Activated T-helper 1 cell treated with anti-CD3 and anti-CD28 coated beads, Interleukin-12 subunit alpha, Interleukin-12 subunit beta, Interleukin-2, Interleukin-4 antibody, amounts not matched to agents 30 ng/mL and 10 ng/mL and 1 ng/mL, durations not matched to agents 14 hours and 24 hours and 36 hours (primary cell): ENCODE measurements at regions of chr10 and their contacts with region 1.

Region 1: GRCh38 chr10:15433850-15434537 is 62.9 kb upstream of the FAM171A1 start:
- DNase-seq: no peak
- H3K4me3 Mint-ChIP-seq: peak overlapping the region; percentile 65
- H3K27ac Mint-ChIP-seq: no peak overlapping the region
- H3K4me1 Mint-ChIP-seq: no peaks in the 10 kb centered on the region
- H3K27me3 Mint-ChIP-seq: peaks cover 5% of the 10 kb centered on the region

Region 2: DNA sequence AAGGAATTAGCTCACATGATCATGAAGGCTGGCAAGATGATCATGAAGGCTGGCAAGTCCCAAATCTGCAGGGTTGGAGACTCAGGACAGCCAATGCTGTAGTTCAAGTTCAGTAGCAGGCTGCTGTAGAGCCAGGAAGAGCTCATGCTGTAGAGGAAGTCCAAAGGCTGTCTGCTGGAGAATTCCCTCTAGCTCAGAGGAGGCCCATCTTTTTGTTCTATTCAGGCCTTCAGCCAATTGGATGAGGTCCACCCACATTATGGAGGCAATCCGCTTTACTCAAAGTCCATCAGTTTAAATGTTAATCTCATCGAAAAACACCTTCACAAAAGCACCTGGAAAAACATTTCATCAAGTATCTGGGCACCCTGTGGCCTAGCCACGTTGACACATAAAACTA is 38.1 kb before region 1 on chr10:
- intact Hi-C with region 1: no loop called
- DNase-seq: no peak
- H3K4me3 Mint-ChIP-seq: no peak overlapping the region
- H3K27ac Mint-ChIP-seq: no peak overlapping the region
- H3K4me1 Mint-ChIP-seq: no peaks in the 10 kb centered on the region
- H3K27me3 Mint-ChIP-seq: peaks cover 3% of the 10 kb centered on the region

Region 3: GRCh38 chr10:15411010-15411409 is 23.0 kb before region 1 on chr10:
- intact Hi-C with region 1: no loop called
- DNase-seq: no peak
- H3K4me3 Mint-ChIP-seq: no peak overlapping the region
- H3K27ac Mint-ChIP-seq: no peak overlapping the region
- H3K4me1 Mint-ChIP-seq: no peaks in the 10 kb centered on the region
- H3K27me3 Mint-ChIP-seq: peaks cover 7% of the 10 kb centered on the region

Region 4: GRCh38 chr10:15558136-15558535 is 124.1 kb after region 1 on chr10:
- intact Hi-C with region 1: loop called (anchors 10 kb)
- DNase-seq: no peak
- H3K4me3 Mint-ChIP-seq: no peak overlapping the region
- H3K27ac Mint-ChIP-seq: no peak overlapping the region
- H3K4me1 Mint-ChIP-seq: no peaks in the 10 kb centered on the region
- H3K27me3 Mint-ChIP-seq: no peaks in the 10 kb centered on the region

Region 5: DNA sequence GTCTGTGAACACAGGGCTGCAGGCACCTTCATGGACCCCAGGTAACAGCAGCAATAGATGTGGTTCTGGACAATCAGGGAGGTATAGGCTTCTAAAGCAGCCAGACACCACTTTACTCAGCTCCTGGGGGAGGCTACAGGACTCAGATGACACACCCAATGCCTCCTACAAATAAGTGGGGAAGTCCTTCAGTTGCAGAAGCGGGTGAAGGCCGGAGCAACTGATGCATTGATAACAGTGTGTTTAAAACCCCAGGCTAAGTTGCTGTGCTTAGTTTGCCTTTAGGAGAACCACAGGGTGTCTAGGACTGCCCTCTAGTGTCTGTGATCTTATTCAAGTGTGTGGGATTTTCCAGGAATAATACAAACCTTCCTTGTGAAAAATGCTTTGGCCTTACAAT is 291.6 kb after region 1 on chr10:
- intact Hi-C with region 1: loop called (anchors 1 kb)
- DNase-seq: no peak
- H3K4me3 Mint-ChIP-seq: no peak overlapping the region
- H3K27ac Mint-ChIP-seq: no peak overlapping the region
- H3K4me1 Mint-ChIP-seq: no peaks in the 10 kb centered on the region
- H3K27me3 Mint-ChIP-seq: peaks cover 26% of the 10 kb centered on the region

Region 6: GRCh38 chr10:15744217-15744865 is 310.3 kb after region 1 on chr10:
- intact Hi-C with region 1: loop called (anchors 1 kb)
- DNase-seq: peak; percentile 11
- H3K4me3 Mint-ChIP-seq: no peak overlapping the region
- H3K27ac Mint-ChIP-seq: no peak overlapping the region
- H3K4me1 Mint-ChIP-seq: no peaks in the 10 kb centered on the region
- H3K27me3 Mint-ChIP-seq: peaks cover 4% of the 10 kb centered on the region